H1 (cell line): ENCODE measurements at regions of chr10 and their contacts with region 1.

Region 1: DNA sequence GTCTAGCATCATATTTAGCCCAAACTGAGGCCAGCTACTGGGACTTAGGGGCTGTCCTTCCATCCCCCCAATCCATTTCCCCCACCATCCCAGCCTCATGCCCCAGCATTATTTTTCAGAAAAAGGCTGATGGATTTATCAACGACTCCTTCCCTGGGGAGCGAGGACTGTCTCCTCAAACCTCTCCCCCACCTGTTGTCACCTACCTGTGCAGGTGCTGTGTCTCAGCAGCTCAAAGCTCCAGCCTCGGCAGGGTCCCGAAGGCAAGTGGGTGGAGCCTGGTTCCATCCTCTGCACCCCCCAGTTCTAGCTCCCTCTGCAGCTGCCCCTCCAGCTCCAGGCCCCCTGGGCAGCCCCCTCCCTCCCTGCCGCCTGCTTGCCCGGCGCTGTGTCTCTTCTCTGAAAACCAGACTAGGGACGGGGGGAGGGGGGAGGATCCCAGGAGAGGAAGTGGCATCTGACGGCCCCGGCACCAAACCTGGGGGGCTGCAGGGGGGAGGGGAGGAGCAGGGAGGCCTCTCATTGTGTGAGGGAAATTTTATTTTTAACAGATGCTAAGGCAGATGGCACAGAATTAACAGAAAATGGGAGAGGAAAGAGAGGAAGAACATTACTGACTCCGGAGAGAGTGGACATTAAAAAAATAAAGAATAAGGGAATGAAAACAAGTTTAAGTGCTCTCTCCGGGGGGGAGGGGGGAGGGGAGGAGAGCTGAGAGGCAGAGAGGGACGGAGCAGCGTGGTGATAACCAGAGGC is 61.7 kb upstream of the PAX2 start:
- DNase-seq: no peak
- H3K4me3 ChIP-seq: peak overlapping the region; percentile 15 to 53 (median 20); a peak in 5 of 8 replicates
- H3K27ac ChIP-seq: no peak overlapping the region
- H3K4me1 ChIP-seq: peaks cover 3 to 24% (median 10%) of the 10 kb centered on the region in 4 experiments
- H3K27me3 ChIP-seq: peaks cover 13 to 79% (median 66%) of the 10 kb centered on the region in 4 experiments
- CTCF ChIP-seq: no peak
- EP300 ChIP-seq: no peak
- POLR2A ChIP-seq: no peak
- RAD21 ChIP-seq: no peak

Region 2: GRCh38 chr10:100192350-100192749 is 491.4 kb before region 1 on chr10:
- CTCF ChIA-PET with region 1: no interaction called
- POLR2A ChIA-PET with region 1: no interaction called
- DNase-seq: no peak
- H3K4me3 ChIP-seq: no peak overlapping the region
- H3K27ac ChIP-seq: no peak overlapping the region
- H3K4me1 ChIP-seq: no peaks in the 10 kb centered on the region
- H3K27me3 ChIP-seq: no peaks in the 10 kb centered on the region
- CTCF ChIP-seq: no peak
- EP300 ChIP-seq: no peak
- POLR2A ChIP-seq: no peak
- RAD21 ChIP-seq: no peak

Region 3: DNA sequence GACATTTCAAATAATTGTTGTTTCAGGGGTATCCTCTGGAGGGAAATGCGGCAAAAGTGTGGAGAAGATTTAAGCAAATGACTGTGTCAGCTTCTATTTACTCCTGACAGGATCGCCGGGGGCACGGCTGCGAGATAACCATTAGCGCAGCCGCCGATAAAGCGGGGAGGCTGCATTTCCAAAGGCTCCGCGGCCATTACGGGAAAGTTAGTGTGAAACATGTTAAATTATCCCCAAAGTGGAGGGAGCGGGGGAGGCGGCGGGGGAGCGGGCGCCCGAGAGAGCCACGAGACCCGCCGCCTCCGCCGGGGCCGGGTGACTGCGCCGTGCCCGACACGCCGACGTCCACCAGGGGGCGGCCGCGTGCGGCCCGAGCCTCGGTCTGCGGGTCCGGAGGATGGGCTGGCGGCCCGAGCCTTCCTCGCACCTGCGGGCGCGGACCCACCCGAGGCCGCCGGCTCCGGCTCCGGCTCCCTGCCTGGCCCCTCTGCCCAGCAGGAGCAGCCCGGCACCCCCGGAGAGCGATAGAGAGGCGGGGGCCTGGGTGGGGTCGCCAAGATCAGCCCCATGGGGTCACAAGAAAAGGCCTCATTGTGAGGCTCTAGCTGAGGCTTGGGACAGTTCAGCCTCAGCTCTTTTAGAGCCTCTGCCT is 12.8 kb before region 1 on chr10:
- CTCF ChIA-PET with region 1: interaction called, 12 read pairs
- POLR2A ChIA-PET with region 1: no interaction called
- DNase-seq: peak in 1 of 2 experiments; percentile 94
- H3K4me3 ChIP-seq: peak overlapping the region; percentile 22 to 54 (median 36); a peak in 5 of 8 replicates
- H3K27ac ChIP-seq: no peak overlapping the region
- H3K4me1 ChIP-seq: peaks cover 4 to 15% (median 9%) of the 10 kb centered on the region in 4 experiments
- H3K27me3 ChIP-seq: peaks cover 2 to 37% (median 27%) of the 10 kb centered on the region in 4 experiments
- CTCF ChIP-seq: peak; percentile 77 to 87 (median 86)
- EP300 ChIP-seq: no peak
- POLR2A ChIP-seq: no peak
- RAD21 ChIP-seq: peak; percentile 43 to 73